ENCODE measurements at regions of chr1 and their contacts with region 1.

Region 1: DNA sequence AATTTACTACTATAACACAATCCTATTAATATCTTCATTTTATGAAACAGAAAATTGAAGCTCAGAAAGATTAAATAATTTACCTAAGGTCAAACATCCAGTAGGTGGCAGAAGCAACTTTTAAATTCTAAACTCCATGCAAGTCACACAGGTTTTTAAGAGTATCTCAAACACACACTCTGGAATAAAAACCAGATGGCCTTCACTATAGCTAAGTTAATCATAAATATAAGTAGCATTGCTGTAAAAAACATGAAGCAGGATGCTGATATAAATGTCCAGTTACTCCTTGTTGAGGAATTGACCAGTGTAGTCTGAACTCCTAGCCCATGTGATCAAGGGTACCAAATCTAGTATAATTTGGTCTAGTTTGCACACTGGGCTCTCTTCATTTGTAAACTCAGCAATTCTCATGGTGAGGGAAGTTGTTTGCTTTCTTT is 9.4 kb upstream of the FMO3 start:
- DNase-seq: no peak
- ATAC-seq: peak; percentile 53

Region 2: GRCh38 chr1:171188388-171189266 is 107.3 kb after region 1 on chr1:
- intact Hi-C with region 1: loop called (anchors 2 kb)
- DNase-seq: peak; percentile 45
- ATAC-seq: peak; percentile 72

Region 3: DNA sequence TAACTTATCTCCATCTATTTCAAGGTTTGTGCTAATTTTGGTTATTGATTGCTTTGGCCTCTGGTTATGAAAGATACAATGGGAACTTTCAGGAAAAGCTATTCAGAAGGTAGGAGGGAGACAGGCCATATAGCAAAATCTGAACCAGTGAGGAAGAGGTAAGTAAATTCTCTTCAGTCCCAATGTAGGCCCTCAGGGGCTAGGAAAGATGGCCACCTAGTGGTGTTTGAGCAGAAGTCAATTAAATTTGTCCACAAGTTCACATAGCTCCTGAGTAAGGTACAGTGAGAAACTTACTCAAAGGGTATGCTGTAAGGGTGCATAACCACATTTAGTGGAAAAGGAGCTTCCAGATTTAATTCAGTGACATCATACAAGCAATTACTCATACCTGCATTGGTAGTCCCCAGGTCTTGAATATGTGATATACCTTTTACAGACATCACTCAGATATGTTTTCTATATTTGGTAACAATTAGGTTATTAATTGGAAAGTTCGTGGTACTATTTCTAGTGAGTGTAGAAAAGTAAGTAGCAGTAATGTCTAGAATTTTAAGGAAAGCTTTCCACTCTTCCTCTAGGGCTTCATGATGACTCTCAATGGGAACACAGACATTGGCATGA is 145.5 kb after region 1 on chr1:
- intact Hi-C with region 1: loop called (anchors 2 kb)
- DNase-seq: no peak
- ATAC-seq: peak; percentile 81

Region 4: GRCh38 chr1:171313835-171314320 is 232.5 kb after region 1 on chr1 and contains the start of gene FMO4:
- intact Hi-C with region 1: loop called (anchors 2 kb)
- DNase-seq: peak; percentile 53
- ATAC-seq: peak; percentile 100
- total RNA-seq, gene FMO4: 2.2 TPM

Measured in left ventricle myocardium superior (tissue), 1 donor.